ENCODE measurements at regions of chr6 and their contacts with region 1.

Region 1: GRCh38 chr6:44109212-44109611 is 18.0 kb downstream of the MRPL14 start:
- DNase-seq: no peak
- ATAC-seq: peak in 1 of 4 donors; percentile 18
- H3K4me3 ChIP-seq: peak overlapping the region; percentile 21
- H3K27ac ChIP-seq: peak overlapping the region; percentile 99
- H3K4me1 ChIP-seq: peaks cover 85% of the 10 kb centered on the region
- H3K27me3 ChIP-seq: no peaks in the 10 kb centered on the region
- CTCF ChIP-seq: no peak

Region 2: GRCh38 chr6:43809417-43810291 is 299.6 kb before region 1 on chr6:
- intact Hi-C with region 1: no loop called
- DNase-seq: no peak
- ATAC-seq: no peak
- H3K4me3 ChIP-seq: no peak overlapping the region
- H3K27ac ChIP-seq: no peak overlapping the region
- H3K4me1 ChIP-seq: peaks cover 40% of the 10 kb centered on the region
- H3K27me3 ChIP-seq: no peaks in the 10 kb centered on the region
- CTCF ChIP-seq: no peak

Region 3: DNA sequence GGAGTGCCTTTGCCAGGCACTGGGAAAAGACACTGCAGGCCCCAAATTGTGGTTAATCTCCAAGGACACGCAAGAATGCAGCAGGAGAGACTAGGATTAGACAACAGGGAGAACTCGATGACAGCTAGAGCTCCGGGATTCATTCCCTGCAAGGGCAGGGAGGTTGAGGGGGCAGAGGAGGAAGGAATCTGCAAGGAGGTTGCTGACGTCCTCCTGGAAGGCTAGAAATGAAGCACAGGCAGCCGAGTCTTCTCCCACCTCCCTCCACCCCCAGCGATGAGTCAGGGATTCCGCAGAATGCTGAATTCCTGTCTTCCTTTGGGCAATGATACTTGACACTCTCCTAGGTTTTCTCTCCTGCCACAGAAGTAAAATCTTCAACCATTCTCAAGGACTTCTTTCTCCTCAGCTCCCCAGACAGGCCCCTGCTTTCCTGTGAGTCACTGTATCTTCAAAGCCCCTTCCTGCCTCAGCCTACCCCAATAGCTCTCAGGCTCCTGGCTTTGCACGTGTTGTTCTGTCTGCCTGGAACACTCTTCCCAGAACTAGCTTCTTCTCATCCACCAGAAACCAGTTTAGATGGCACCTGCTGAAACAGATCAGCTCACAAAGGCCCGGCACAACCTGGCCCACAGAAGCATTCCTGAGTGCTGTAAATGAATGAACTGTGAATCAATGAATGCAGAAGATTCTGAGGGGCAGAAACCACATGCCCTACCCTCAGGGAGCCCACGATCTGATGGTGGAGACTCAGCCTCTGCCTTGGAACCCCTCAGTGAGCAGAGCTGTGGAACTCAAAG is 67.6 kb before region 1 on chr6:
- intact Hi-C with region 1: no loop called
- DNase-seq: peak in 1 of 2 donors; percentile 52
- ATAC-seq: peak in 2 of 4 donors; percentile 47 to 72
- H3K4me3 ChIP-seq: no peak overlapping the region
- H3K27ac ChIP-seq: no peak overlapping the region
- H3K4me1 ChIP-seq: peaks cover 15% of the 10 kb centered on the region
- H3K27me3 ChIP-seq: no peaks in the 10 kb centered on the region
- CTCF ChIP-seq: no peak

Region 4: DNA sequence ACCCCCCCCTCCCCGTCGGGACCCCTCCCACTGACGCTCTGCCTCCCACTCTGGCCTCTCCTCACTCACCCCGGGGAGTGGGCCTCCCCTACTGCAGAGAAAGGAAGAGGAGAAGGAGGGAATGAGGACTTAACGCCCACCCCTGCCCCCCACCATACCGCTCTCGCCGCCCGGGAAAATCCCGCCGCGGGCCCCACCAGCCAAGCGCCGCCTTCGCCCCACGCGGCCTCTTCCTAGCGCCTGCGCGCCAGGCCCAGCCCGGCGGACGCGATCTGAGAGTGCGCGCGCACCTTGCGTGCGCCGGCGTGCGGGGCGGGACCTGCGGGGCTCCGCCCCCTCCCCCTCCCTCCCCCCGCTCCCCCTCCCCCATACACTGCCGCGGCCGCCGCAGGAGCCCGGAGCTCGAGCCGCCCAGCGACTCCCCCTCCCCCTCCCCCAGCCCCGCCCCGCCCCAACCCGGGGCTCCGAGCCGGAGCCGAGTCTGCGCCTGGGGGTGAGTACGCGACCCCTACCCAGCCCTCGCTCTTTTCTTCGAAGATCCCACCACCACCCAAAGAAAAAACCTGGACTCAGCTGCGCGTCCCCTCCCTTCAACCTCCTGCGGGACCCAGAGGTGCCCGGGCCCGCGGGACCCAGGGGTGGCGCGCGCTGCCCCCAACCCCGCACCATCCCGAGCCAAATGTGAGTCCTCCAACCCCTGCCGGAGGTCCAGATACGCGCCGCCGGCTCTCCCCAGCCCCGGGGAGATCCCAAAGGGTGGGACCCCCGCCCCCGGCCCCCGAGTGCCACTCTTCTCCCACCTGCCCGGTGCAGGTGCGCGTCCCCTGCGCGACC is 18.2 kb after region 1 on chr6 and contains the starts of genes MRPL14 and TMEM63B:
- intact Hi-C with region 1: loop called in 1 of 2 experiments (anchors 1 kb)
- DNase-seq: peak; percentile 89 to 95
- ATAC-seq: peak; percentile 89 to 93 (median 92)
- H3K4me3 ChIP-seq: peak within 1 kb of the TSS; percentile 98
- H3K27ac ChIP-seq: peak within 1 kb of the TSS; percentile 99
- H3K4me1 ChIP-seq: peaks cover 42% of the 10 kb centered on the region
- H3K27me3 ChIP-seq: no peaks in the 10 kb centered on the region
- CTCF ChIP-seq: no peak
- total RNA-seq, gene MRPL14: 62.3 to 177 (median 113) TPM
- total RNA-seq, gene TMEM63B: 32.7 to 121 (median 40.3) TPM

Region 5: GRCh38 chr6:44397424-44398164 is 288.4 kb after region 1 on chr6:
- intact Hi-C with region 1: no loop called
- DNase-seq: no peak
- ATAC-seq: peak in 3 of 4 donors; percentile 41 to 72 (median 59)
- H3K4me3 ChIP-seq: no peak overlapping the region
- H3K27ac ChIP-seq: peak overlapping the region; percentile 7
- H3K4me1 ChIP-seq: peaks cover 18% of the 10 kb centered on the region
- H3K27me3 ChIP-seq: no peaks in the 10 kb centered on the region
- CTCF ChIP-seq: no peak